ENCODE measurements at regions of chr6 and their contacts with region 1.

Region 1: GRCh38 chr6:166456395-166457156 is 73.8 kb upstream of the MPC1 start:
- DNase-seq: peak; percentile 47 to 65 (median 61)
- H3K4me3 ChIP-seq: no peak overlapping the region
- H3K27ac ChIP-seq: no peak overlapping the region
- H3K4me1 ChIP-seq: peaks cover 0 to 15% (median 5%) of the 10 kb centered on the region in 4 experiments
- H3K27me3 ChIP-seq: no peaks in the 10 kb centered on the region

Region 2: DNA sequence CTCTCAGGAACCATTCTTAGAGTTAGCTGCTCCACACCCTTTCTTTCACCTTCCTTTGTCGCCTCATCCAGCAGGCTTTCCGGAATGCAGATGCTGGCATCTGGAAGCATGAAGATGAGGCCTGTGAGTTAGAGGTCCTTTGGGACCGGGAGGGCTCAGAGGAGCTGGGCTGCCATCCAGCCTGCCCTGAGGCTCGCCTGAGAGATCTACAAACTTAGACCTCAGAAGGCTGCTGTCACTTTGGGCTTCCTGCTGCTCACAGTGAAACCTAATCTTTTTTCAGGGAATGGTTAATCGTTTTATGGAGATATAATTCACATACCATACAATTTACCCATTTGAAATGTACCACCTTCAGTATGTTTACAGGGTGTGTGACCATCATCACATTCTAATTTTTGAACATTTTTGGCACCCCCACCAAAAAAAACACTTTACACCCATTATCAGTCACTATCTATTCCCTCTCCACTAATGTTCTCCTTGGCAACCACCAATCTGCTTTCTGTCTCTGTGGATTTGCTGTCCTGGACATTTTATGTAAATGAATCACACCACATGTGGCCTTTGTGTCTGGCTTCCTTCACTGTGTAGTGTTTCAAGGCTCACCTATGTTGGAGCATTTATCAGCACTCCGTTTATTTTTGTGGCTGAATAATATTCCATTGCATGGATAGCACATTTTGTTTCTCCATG is 53.8 kb before region 1 on chr6:
- CTCF ChIA-PET with region 1: no interaction called
- POLR2A ChIA-PET with region 1: no interaction called
- DNase-seq: no peak
- H3K4me3 ChIP-seq: no peak overlapping the region
- H3K27ac ChIP-seq: no peak overlapping the region
- H3K4me1 ChIP-seq: peaks cover 0 to 2% (median 0%) of the 10 kb centered on the region in 4 experiments
- H3K27me3 ChIP-seq: no peaks in the 10 kb centered on the region

Region 3: DNA sequence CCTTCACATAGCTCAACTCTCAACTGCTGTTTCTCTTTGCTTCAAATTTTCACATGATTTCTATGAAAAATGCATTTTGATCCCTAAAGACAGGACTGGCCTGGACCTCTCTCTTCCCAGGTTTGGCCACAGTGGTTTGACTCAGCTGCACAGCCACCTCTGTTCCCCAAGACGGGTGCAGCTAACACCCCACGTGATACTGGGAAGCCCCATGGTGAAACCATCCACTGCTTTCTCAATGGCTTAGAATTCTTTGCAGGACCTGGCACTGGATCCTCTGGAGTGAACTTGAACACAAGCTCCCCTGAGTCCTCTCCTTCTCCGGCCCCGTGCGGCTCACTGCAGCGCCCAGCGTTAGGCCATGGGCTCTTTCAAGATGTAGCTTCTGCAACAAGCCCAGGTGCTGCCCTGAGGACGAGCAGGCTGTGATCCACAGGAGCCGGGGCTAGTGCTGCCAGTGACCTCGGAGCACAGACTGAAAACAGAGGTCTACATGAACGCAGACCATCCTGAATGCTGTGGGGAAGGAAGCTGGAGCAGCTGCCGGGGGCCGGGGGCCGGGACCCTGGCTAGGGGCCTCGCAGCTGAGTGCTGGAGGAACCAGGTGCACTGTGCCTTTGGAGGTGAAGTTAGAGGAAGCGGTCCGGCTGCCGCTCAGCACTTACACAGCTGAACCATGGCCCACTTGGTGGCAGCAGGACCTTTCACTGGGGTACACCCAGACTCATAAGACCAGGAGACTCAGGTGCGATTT is 15.1 kb before region 1 on chr6:
- CTCF ChIA-PET with region 1: interaction called, 118 read pairs
- POLR2A ChIA-PET with region 1: no interaction called
- DNase-seq: peak in 2 of 3 donors; percentile 85 to 89
- H3K4me3 ChIP-seq: peak overlapping the region in 2 of 7 experiments; percentile 24 to 31
- H3K27ac ChIP-seq: no peak overlapping the region
- H3K4me1 ChIP-seq: peaks cover 16 to 61% (median 57%) of the 10 kb centered on the region in 4 experiments
- H3K27me3 ChIP-seq: no peaks in the 10 kb centered on the region

Region 4: DNA sequence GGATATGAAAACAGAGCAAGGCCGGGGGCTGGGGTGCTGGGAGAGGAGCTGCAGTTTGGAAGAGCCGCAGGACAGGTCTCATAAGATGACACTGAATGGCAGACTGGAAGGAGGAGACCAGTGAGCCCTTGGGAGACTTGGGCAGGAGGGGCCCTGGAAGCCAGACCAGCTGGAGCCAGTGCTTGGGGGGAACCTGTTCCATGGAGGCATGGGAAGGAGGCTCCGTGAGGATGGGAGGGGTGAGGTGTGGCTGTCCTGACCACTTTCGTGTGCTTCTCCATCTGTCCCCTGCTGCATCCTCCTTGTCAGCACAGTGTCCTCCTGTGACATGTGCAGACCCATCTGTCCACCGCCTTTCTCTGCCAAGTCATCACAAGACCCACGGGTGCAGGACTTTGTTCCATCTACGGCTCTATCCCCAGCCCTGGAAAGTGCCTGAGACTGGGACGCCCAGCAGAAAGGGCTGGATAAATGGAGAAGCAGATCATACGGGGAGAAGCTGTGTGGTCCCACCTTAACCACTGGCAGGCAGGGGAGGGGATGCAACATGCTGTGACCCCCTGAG is 10.9 kb after region 1 on chr6:
- CTCF ChIA-PET with region 1: interaction called, 10 read pairs
- POLR2A ChIA-PET with region 1: no interaction called
- DNase-seq: no peak
- H3K4me3 ChIP-seq: no peak overlapping the region
- H3K27ac ChIP-seq: no peak overlapping the region
- H3K4me1 ChIP-seq: peaks cover 3 to 27% (median 22%) of the 10 kb centered on the region in 4 experiments
- H3K27me3 ChIP-seq: no peaks in the 10 kb centered on the region

Region 5: GRCh38 chr6:166485651-166486535 is 29.3 kb after region 1 on chr6:
- CTCF ChIA-PET with region 1: no interaction called
- POLR2A ChIA-PET with region 1: no interaction called
- DNase-seq: no peak
- H3K4me3 ChIP-seq: peak overlapping the region in 1 of 7 experiments; percentile 37
- H3K27ac ChIP-seq: no peak overlapping the region
- H3K4me1 ChIP-seq: peaks cover 1 to 23% (median 18%) of the 10 kb centered on the region in 4 experiments
- H3K27me3 ChIP-seq: no peaks in the 10 kb centered on the region

Measured in common myeloid progenitor, CD34-positive (primary cell).